ENCODE measurements at regions of chr17 and their contacts with region 1.

Region 1: DNA sequence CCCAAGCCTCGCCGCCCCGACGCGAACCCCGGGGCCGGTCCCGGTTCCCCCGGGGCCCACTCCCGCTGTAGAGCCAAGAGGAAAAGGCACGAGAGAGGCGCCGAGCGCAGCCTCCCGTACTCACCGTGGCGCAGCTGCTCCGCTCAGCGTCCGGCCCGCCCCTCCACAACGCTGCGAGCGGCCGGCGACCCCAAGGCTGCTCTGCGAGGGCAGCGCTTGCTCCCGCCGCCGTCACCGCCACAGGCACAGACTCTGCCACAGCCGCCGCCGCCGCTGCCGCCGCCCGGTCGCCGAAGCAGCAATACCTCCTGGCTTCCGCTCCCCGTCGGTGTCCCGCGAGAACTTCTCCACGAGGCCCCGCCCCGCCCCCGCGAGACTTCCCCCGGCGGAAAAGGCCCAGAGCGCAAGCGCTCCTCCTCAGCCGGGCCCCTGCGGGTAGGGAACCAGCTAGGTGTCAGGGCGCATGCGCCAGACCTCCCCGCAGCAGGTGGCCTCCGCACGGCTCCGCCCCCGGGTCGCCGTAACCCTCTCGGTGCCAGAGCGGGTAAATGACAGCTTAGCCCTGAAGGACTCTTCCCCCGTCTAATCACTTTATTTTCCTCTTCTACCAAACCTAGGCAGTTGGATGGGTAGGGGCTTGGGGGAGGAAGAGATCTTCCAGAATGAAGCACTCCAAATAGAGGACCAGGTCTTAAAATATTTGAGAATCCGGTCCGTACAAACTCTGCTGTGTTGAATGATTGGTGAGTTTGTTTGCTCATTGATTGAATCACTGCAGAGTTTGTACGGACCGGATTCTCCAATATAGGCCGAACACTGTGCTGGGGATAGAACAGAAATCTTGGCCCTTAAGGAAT is at the start of gene GRB2:
- DNase-seq: peak; percentile 100
- H3K4me3 Mint-ChIP-seq: peak within 1 kb of the TSS; percentile 97
- H3K27ac Mint-ChIP-seq: peak within 1 kb of the TSS; percentile 97
- H3K4me1 Mint-ChIP-seq: peaks cover 38% of the 10 kb centered on the region
- H3K27me3 Mint-ChIP-seq: no peaks in the 10 kb centered on the region
- total RNA-seq, gene GRB2: 166 to 169 TPM

Region 2: DNA sequence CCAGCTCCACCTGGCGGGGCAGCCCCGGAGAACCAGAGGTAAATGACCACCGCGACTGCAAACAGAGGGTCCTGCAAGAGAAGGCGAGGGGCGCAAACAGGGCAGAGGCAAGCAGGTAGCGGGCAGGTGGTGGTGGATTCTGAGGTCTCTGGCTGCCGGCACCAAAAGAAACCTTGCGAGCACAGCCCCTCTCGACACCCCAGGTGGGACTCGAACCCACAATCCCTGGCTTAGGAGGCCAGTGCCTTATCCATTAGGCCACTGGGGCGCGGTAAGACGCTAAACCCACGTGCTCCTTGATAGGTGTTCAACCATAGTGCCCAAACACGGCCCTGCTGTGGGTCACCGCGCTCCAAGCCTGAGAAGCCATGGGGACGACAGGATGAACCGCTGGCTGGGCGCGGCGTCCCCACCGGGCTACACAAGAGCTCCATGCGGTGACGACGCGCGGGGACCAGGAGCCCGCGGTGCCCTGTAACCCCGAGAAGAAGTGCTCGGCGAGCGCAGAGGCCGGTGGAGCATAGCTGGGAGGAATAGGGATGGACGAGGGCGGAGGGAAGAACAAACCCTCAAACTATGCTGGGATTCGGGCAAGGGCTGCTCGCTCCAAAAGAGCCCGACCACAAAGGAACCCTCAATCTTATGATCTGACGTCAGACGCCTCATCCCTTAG is 371.2 kb before region 1 on chr17:
- CTCF ChIA-PET with region 1: no interaction called
- intact Hi-C with region 1: loop called (anchors 5 kb)
- DNase-seq: peak; percentile 96
- H3K4me3 Mint-ChIP-seq: peak overlapping the region; percentile 95
- H3K27ac Mint-ChIP-seq: peak overlapping the region; percentile 93
- H3K4me1 Mint-ChIP-seq: peaks cover 46% of the 10 kb centered on the region
- H3K27me3 Mint-ChIP-seq: peaks cover 3% of the 10 kb centered on the region

Region 3: GRCh38 chr17:75261336-75262111 is 144.1 kb before region 1 on chr17 and contains the starts of genes GGA3 and MRPS7:
- CTCF ChIA-PET with region 1: no interaction called
- intact Hi-C with region 1: loop called (anchors 1 kb)
- DNase-seq: peak; percentile 98
- H3K4me3 Mint-ChIP-seq: peak within 1 kb of the TSS; percentile 93
- H3K27ac Mint-ChIP-seq: peak within 1 kb of the TSS; percentile 99
- H3K4me1 Mint-ChIP-seq: peaks cover 53% of the 10 kb centered on the region
- H3K27me3 Mint-ChIP-seq: no peaks in the 10 kb centered on the region
- total RNA-seq, gene GGA3: 65.7 to 66.1 TPM
- total RNA-seq, gene MRPS7: 73.3 to 78.3 TPM

Region 4: DNA sequence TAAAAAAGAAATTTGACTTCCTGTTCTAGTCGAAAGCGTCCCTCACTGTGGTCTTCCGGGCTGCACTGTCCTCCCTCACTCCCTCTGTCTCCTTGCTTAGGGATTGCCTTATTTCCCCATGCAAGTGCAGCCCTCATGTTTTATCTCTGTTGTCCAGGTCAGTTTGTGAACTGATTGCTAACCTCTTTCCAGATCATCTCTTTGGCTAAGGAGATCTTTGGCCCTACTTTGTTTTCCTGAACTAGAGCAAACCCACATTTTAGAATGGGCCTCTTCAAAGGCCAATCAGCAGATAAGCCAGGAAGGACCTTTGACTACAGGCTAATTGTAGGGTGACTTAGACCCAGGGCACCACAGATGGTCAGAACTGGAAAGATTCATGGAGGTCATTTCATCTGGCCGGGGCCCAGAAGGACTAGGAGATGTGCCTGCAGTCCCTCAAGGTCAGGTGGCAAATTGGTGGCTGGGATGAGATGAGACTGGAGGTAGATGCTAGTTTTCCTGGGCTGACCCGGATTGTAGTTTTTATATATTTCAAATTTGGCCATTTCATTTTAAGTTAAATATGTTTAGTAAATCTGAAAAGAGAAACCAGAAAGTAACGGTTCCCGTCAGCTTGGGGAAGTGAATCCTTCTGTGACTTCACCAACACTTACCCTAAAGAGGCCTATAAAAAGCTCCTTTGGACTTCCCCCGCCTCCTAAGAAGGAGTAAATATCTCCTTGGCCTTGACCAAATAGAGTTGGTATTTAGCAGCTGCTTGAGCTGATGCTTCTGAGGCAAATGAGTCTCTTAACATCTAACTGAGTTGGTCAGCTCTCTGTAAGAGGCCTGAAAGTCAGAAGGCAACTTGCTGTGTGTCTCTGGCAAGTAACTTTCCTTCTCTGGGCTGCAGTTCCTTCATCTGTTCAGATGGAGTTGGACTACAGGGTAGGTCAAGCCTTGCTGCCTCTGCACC is 110.1 kb before region 1 on chr17:
- CTCF ChIA-PET with region 1: interaction called, 4 read pairs
- intact Hi-C with region 1: loop called (anchors 1 kb)
- DNase-seq: peak; percentile 74
- H3K4me3 Mint-ChIP-seq: peak overlapping the region; percentile 42
- H3K27ac Mint-ChIP-seq: peak overlapping the region; percentile 89
- H3K4me1 Mint-ChIP-seq: peaks cover 41% of the 10 kb centered on the region
- H3K27me3 Mint-ChIP-seq: no peaks in the 10 kb centered on the region

Region 5: GRCh38 chr17:75364078-75364477 is 41.5 kb before region 1 on chr17:
- CTCF ChIA-PET with region 1: interaction called, 3 read pairs
- intact Hi-C with region 1: loop called (anchors 1 kb)
- DNase-seq: no peak
- H3K4me3 Mint-ChIP-seq: no peak overlapping the region
- H3K27ac Mint-ChIP-seq: peak overlapping the region; percentile 82
- H3K4me1 Mint-ChIP-seq: peaks cover 93% of the 10 kb centered on the region
- H3K27me3 Mint-ChIP-seq: no peaks in the 10 kb centered on the region

Region 6: DNA sequence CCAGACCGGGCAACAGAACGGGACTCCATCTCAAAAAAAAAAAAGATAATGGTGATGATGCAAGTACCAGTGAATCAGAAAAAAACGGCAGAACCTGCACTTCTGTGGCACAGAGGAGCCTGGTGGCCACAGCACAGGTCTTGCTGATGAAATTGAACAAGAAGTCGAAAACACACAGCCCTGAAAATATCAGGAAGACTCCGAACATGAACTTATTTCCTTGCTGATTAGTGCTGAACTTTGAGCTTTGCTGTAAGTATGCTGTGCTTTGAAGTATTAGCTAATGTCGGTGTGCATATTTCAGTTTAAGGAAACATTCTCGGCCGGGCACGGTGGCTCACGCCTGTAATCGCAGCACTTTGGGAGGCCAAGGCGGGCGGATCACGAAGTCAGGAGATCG is 171.1 kb after region 1 on chr17:
- CTCF ChIA-PET with region 1: no interaction called
- intact Hi-C with region 1: no loop called
- DNase-seq: no peak
- H3K4me3 Mint-ChIP-seq: no peak overlapping the region
- H3K27ac Mint-ChIP-seq: no peak overlapping the region
- H3K4me1 Mint-ChIP-seq: peaks cover 5% of the 10 kb centered on the region
- H3K27me3 Mint-ChIP-seq: no peaks in the 10 kb centered on the region

Region 7: GRCh38 chr17:75610103-75610984 is 204.8 kb after region 1 on chr17:
- CTCF ChIA-PET with region 1: no interaction called
- intact Hi-C with region 1: no loop called
- DNase-seq: no peak
- H3K4me3 Mint-ChIP-seq: no peak overlapping the region
- H3K27ac Mint-ChIP-seq: no peak overlapping the region
- H3K4me1 Mint-ChIP-seq: peaks cover 3% of the 10 kb centered on the region
- H3K27me3 Mint-ChIP-seq: no peaks in the 10 kb centered on the region